Activated CD4-positive, alpha-beta T cell treated with anti-CD3 and anti-CD28 coated beads for 36 hours (primary cell): ENCODE measurements at regions of chr11 and their contacts with region 1.

Region 1: GRCh38 chr11:73177778-73178577 is 35.9 kb upstream of the FCHSD2 start:
- DNase-seq: peak; percentile 89
- ATAC-seq: peak; percentile 100
- H3K4me3 Mint-ChIP-seq: no peak overlapping the region
- H3K27ac Mint-ChIP-seq: no peak overlapping the region
- H3K4me1 Mint-ChIP-seq: no peaks in the 10 kb centered on the region
- H3K27me3 Mint-ChIP-seq: no peaks in the 10 kb centered on the region

Region 2: DNA sequence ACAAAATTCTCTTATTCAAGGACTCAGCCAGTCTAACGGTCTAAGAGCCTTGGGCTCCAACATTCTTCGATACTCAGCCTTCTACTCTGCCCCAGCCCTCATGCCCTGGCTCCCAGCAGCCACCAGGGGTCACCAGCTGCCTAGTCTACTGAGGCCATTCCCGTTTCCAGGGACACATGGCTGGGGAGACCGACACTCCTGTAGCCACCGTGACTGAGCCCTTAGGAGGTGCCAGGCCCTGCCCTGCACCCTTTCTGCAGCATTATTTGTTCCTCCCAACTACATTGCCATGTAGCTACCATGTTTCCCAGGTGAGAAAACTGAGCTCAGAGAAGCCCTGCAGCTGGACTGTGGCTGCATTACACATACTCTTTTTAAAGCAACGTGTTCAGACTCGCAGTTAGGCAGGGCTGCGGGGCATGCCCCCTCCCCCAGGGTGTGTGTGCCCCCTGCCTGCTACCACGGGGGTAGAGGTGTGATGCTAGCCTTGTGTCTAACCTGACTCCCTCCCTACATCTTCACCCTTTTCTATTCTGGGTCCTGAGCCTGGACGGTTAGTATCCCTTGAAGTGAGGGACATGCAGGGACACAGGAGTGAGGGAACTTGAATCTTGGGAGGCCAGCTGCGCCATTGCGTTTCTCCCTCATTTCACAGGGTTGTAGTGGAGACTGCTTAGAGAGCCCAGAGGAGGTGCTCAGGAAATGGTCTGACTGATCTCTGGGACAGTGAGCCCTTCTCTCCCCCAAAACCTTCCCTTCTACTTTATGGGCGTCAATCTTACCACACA is 346.3 kb before region 1 on chr11:
- CTCF ChIA-PET with region 1: interaction called, 55 read pairs
- POLR2A ChIA-PET with region 1: interaction called, 4 read pairs
- intact Hi-C with region 1: loop called (anchors 1 kb)
- DNase-seq: peak; percentile 75
- ATAC-seq: peak; percentile 64
- H3K4me3 Mint-ChIP-seq: no peak overlapping the region
- H3K27ac Mint-ChIP-seq: peak overlapping the region; percentile 2
- H3K4me1 Mint-ChIP-seq: peaks cover 20% of the 10 kb centered on the region
- H3K27me3 Mint-ChIP-seq: no peaks in the 10 kb centered on the region

Region 3: DNA sequence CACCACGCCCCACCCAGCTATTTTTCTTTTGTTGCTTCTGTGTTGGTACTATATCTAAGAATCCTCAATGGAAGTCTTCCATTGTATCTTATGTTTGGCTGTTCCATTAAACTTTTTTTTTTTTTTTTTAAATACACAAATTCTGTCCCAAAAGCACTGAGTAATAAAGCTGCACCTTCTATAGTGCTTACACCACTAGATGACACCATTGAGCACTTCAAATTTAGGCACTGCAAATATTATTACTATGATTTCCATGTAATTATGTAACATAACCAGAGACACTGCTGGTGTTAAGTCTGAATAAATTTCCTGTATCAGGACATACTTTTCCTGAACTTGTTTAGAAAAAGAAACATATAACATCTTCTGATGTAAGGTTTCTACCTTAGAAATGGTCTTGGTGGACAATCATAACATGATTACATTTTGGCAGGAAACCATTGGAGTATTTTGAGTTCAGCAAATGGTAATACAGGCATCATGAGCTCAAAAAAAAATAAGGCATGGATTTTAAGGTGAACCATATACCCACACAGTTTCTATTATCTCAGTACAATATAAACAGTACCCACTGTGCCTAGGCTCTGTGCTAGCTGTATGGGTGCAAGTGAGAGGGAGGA is 253.3 kb before region 1 on chr11:
- CTCF ChIA-PET with region 1: interaction called, 40 read pairs
- POLR2A ChIA-PET with region 1: no interaction called
- intact Hi-C with region 1: loop called (anchors 1 kb)
- DNase-seq: no peak
- ATAC-seq: peak; percentile 60
- H3K4me3 Mint-ChIP-seq: no peak overlapping the region
- H3K27ac Mint-ChIP-seq: no peak overlapping the region
- H3K4me1 Mint-ChIP-seq: peaks cover 3% of the 10 kb centered on the region
- H3K27me3 Mint-ChIP-seq: no peaks in the 10 kb centered on the region

Region 4: GRCh38 chr11:73157053-73158010 is 20.6 kb before region 1 on chr11:
- CTCF ChIA-PET with region 1: interaction called, 20 read pairs
- POLR2A ChIA-PET with region 1: no interaction called
- intact Hi-C with region 1: no loop called
- DNase-seq: no peak
- ATAC-seq: no peak
- H3K4me3 Mint-ChIP-seq: no peak overlapping the region
- H3K27ac Mint-ChIP-seq: no peak overlapping the region
- H3K4me1 Mint-ChIP-seq: peaks cover 40% of the 10 kb centered on the region
- H3K27me3 Mint-ChIP-seq: no peaks in the 10 kb centered on the region

Region 5: GRCh38 chr11:73164803-73165540 is 13.0 kb before region 1 on chr11:
- CTCF ChIA-PET with region 1: interaction called, 10 read pairs
- POLR2A ChIA-PET with region 1: no interaction called
- intact Hi-C with region 1: no loop called
- DNase-seq: no peak
- ATAC-seq: no peak
- H3K4me3 Mint-ChIP-seq: no peak overlapping the region
- H3K27ac Mint-ChIP-seq: no peak overlapping the region
- H3K4me1 Mint-ChIP-seq: no peaks in the 10 kb centered on the region
- H3K27me3 Mint-ChIP-seq: peaks cover 4% of the 10 kb centered on the region